HCT116 (cell line): ENCODE measurements at regions of chr12 and their contacts with region 1.

Region 1: GRCh38 chr12:96399919-96400797 is at the start of gene CDK17:
- DNase-seq: peak; percentile 50
- ATAC-seq: peak; percentile 76
- H3K4me3 ChIP-seq: peak within 1 kb of the TSS; percentile 59 to 70
- H3K27ac ChIP-seq: peak within 1 kb of the TSS; percentile 98
- H3K4me1 ChIP-seq: peaks cover 10 to 20% of the 10 kb centered on the region in 2 experiments; a peak in 3 of 4 replicates
- H3K27me3 ChIP-seq: no peaks in the 10 kb centered on the region
- CTCF ChIP-seq: peak in 1 of 3 experiments; percentile 39; a peak in 1 of 6 replicates
- POLR2A ChIP-seq: peak; percentile 39
- RAD21 ChIP-seq: peak; percentile 49
- total RNA-seq, gene CDK17: 21.4 TPM

Region 2: GRCh38 chr12:96186607-96187301 is 213.4 kb before region 1 on chr12:
- CTCF ChIA-PET with region 1: no interaction called
- POLR2A ChIA-PET with region 1: no interaction called
- RAD21 ChIA-PET with region 1: no interaction called
- intact Hi-C with region 1: no loop called
- DNase-seq: no peak
- ATAC-seq: no peak
- H3K4me3 ChIP-seq: no peak overlapping the region
- H3K27ac ChIP-seq: no peak overlapping the region
- H3K4me1 ChIP-seq: no peaks in the 10 kb centered on the region
- H3K27me3 ChIP-seq: no peaks in the 10 kb centered on the region
- CTCF ChIP-seq: no peak
- POLR2A ChIP-seq: no peak
- RAD21 ChIP-seq: no peak

Region 3: GRCh38 chr12:96501139-96501761 is 101.1 kb after region 1 on chr12:
- CTCF ChIA-PET with region 1: interaction called, 3 read pairs
- POLR2A ChIA-PET with region 1: interaction called, 4 read pairs
- RAD21 ChIA-PET with region 1: no interaction called
- intact Hi-C with region 1: loop called (anchors 5 kb)
- DNase-seq: peak; percentile 70
- ATAC-seq: peak; percentile 94
- H3K4me3 ChIP-seq: peak overlapping the region in 1 of 2 experiments; percentile 1; a peak in 1 of 4 replicates
- H3K27ac ChIP-seq: peak overlapping the region; percentile 45
- H3K4me1 ChIP-seq: peaks cover 17 to 28% of the 10 kb centered on the region in 2 experiments
- H3K27me3 ChIP-seq: no peaks in the 10 kb centered on the region
- CTCF ChIP-seq: no peak
- POLR2A ChIP-seq: no peak
- RAD21 ChIP-seq: no peak